Heart left ventricle (tissue), 16 donors: ENCODE measurements at regions of chr14 and their contacts with region 1.

Region 1: GRCh38 chr14:50335389-50335788 is 23.3 kb downstream of the DMAC2L start:
- DNase-seq: peak in 4 of 5 donors; percentile 45 to 68 (median 53)
- ATAC-seq: peak; percentile 38 to 70 (median 56)
- H3K4me3 ChIP-seq: no peak overlapping the region
- H3K27ac ChIP-seq: peak overlapping the region; percentile 59 to 87 (median 76)
- H3K4me1 ChIP-seq: peaks cover 0 to 46% (median 34%) of the 10 kb centered on the region in 12 donors
- H3K27me3 ChIP-seq: no peaks in the 10 kb centered on the region
- CTCF ChIP-seq: peak in 3 of 12 donors; percentile 5 to 17 (median 7)
- POLR2A ChIP-seq: no peak

Region 2: DNA sequence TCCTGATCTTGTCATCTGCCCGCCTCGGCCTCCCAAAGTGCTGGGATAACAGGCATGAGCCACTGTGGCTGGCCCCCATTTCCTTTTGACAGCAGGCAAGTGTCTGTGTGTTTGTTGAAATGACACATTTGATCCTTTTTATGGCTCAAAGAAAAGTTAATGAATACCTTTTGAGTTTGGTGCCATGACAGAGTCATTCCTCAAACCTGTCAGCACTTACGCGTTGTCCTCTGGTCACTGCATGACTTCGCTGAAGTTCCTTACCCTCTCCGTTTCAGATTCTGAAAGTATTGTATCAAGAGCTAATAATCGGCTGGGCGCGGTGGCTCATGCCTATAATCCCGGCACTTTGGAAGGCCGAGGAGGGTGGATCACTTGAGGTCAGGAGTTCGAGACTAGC is 515.2 kb before region 1 on chr14:
- intact Hi-C with region 1: no loop called
- DNase-seq: no peak
- ATAC-seq: no peak
- H3K4me3 ChIP-seq: no peak overlapping the region
- H3K27ac ChIP-seq: no peak overlapping the region
- H3K4me1 ChIP-seq: no peaks in the 10 kb centered on the region
- H3K27me3 ChIP-seq: no peaks in the 10 kb centered on the region
- CTCF ChIP-seq: no peak
- POLR2A ChIP-seq: no peak

Region 3: DNA sequence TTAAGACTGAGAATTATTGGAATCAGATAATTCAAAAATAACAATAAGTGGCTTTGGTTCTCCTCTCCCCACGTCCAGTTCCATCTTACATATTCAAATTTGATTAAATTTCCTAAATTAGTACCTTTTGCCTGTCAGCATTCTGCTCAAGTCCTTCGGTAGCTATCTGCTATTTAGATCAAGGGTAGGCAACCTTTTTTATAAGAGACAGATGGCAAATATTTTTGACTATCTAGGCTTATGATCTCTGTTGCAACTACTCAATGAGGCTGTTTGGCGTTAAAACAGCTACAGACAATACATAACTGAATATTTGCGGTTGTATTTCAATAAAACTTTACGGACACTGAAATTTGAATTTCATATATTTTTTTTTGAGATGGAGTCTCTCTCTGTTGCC is 45.1 kb before region 1 on chr14:
- intact Hi-C with region 1: no loop called
- DNase-seq: no peak
- ATAC-seq: no peak
- H3K4me3 ChIP-seq: no peak overlapping the region
- H3K27ac ChIP-seq: no peak overlapping the region
- H3K4me1 ChIP-seq: no peaks in the 10 kb centered on the region
- H3K27me3 ChIP-seq: no peaks in the 10 kb centered on the region
- CTCF ChIP-seq: no peak
- POLR2A ChIP-seq: no peak

Region 4: GRCh38 chr14:50311975-50312733 is 23.2 kb before region 1 on chr14 and contains the starts of genes DMAC2L and L2HGDH:
- intact Hi-C with region 1: no loop called
- DNase-seq: peak; percentile 93 to 96 (median 95)
- ATAC-seq: peak; percentile 99
- H3K4me3 ChIP-seq: peak within 1 kb of the TSS; percentile 64 to 96 (median 84)
- H3K27ac ChIP-seq: peak within 1 kb of the TSS; percentile 67 to 95 (median 93)
- H3K4me1 ChIP-seq: peaks cover 0 to 21% (median 15%) of the 10 kb centered on the region in 12 donors
- H3K27me3 ChIP-seq: no peaks in the 10 kb centered on the region
- CTCF ChIP-seq: peak in 6 of 12 donors; percentile 6 to 47 (median 30)
- POLR2A ChIP-seq: peak in 1 of 2 donors; percentile 77
- total RNA-seq, gene DMAC2L: 12.6 to 29.9 (median 23.7) TPM
- total RNA-seq, gene L2HGDH: 6.5 to 12.2 (median 9.1) TPM

Region 5: GRCh38 chr14:50347521-50347920 is 12.1 kb after region 1 on chr14:
- intact Hi-C with region 1: loop called in 1 of 10 experiments (anchors 1 kb)
- DNase-seq: no peak
- ATAC-seq: peak in 2 of 4 donors; percentile 41 to 50
- H3K4me3 ChIP-seq: no peak overlapping the region
- H3K27ac ChIP-seq: peak overlapping the region in 2 of 12 donors; percentile 2 to 68
- H3K4me1 ChIP-seq: peaks cover 0 to 38% (median 19%) of the 10 kb centered on the region in 12 donors
- H3K27me3 ChIP-seq: no peaks in the 10 kb centered on the region
- CTCF ChIP-seq: no peak
- POLR2A ChIP-seq: no peak

Region 6: GRCh38 chr14:50383618-50384225 is 48.3 kb after region 1 on chr14:
- intact Hi-C with region 1: no loop called
- DNase-seq: no peak
- ATAC-seq: no peak
- H3K4me3 ChIP-seq: no peak overlapping the region
- H3K27ac ChIP-seq: no peak overlapping the region
- H3K4me1 ChIP-seq: peaks cover 0 to 4% (median 0%) of the 10 kb centered on the region in 12 donors
- H3K27me3 ChIP-seq: no peaks in the 10 kb centered on the region
- CTCF ChIP-seq: no peak
- POLR2A ChIP-seq: no peak